ENCODE measurements at regions of chr2 and their contacts with region 1.

Region 1: GRCh38 chr2:219278655-219279516 is at the start of gene DNAJB2:
- DNase-seq: peak; percentile 100
- CTCF ChIP-seq: no peak

Region 2: DNA sequence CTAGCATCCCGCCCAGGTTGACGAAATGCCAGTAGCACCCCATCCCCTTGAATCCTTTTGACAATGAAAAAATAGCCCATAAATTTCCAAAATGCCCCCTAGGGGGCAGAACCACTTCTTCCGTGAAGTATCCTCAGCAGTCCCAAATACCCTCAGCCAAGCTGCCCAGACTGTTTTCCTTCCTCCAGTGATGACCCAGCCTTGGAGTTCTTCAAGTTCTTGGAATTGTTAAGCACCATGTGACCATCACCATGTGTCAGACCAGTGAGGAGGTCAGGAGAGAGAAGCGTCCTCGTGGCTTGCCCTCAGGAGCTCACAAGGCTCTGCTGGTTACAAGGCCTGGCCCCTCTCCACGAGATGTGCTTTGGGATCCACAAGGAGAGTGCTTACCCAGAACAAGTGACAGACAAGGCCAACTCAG is 107.6 kb before region 1 on chr2:
- CTCF ChIA-PET with region 1: interaction called, 39 read pairs
- POLR2A ChIA-PET with region 1: interaction called, 7 read pairs
- DNase-seq: peak; percentile 46
- CTCF ChIP-seq: peak; percentile 59

Region 3: GRCh38 chr2:219215951-219216486 is 62.9 kb before region 1 on chr2:
- CTCF ChIA-PET with region 1: interaction called, 7 read pairs
- POLR2A ChIA-PET with region 1: interaction called, 12 read pairs
- DNase-seq: no peak
- CTCF ChIP-seq: no peak

Region 4: GRCh38 chr2:219253753-219254590 is 24.9 kb before region 1 on chr2 and contains the start of gene TUBA4A:
- CTCF ChIA-PET with region 1: interaction called, 114 read pairs
- POLR2A ChIA-PET with region 1: interaction called, 19 read pairs
- DNase-seq: peak; percentile 98
- CTCF ChIP-seq: no peak

Region 5: DNA sequence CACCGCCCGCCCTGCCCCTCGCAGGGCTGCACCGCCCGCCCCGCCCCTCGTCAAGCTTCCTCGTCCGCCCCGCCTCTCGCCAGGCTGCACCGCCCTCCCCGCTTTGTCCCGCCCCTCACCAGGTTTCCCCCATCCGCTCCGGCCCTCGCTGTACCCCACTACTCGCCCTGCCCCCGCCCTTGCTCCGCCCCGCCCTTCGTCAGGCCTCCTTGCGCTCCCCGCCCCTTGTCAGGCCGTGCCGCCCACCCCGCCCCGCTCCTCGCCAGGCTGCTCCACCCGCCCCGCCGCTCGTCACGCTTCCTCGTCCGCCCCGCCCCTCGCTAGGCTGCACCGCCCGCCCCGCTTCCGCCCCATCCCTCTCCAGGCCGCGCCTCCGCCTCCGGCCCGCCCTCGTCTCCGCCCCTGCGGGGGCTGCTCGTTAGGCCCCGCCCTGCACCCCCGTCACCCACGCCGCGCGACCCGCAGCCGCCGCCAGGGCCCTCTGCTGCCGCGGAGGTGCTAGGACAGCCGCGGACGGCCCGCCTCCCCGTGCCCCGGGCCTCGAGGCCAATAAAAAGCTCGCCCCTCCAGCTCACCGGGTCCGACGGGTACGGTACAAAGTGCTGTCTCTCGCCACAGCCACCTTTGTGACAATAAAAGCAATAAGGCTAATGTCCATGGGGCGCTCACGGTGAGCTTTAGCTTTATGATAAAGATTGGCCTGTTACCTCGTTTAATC is 109.4 kb after region 1 on chr2:
- CTCF ChIA-PET with region 1: interaction called, 3 read pairs
- POLR2A ChIA-PET with region 1: interaction called, 10 read pairs
- DNase-seq: peak; percentile 99
- CTCF ChIP-seq: peak; percentile 60

Measured in GM10248 (cell line).